CD8-positive, alpha-beta T cell (primary cell): ENCODE measurements at regions of chrX and their contacts with region 1.

Region 1: GRCh38 chrX:46758906-46759644 is at the start of gene SLC9A7:
- DNase-seq: peak; percentile 56 to 86 (median 76)
- ATAC-seq: peak; percentile 84
- H3K4me3 ChIP-seq: peak within 1 kb of the TSS; percentile 52 to 67
- H3K4me3 Mint-ChIP-seq: peak within 1 kb of the TSS; percentile 90
- H3K27ac ChIP-seq: no peak within 1 kb of the TSS
- H3K27ac Mint-ChIP-seq: peak within 1 kb of the TSS; percentile 69
- H3K4me1 ChIP-seq: peaks cover 14% of the 10 kb centered on the region
- H3K4me1 Mint-ChIP-seq: peaks cover 11% of the 10 kb centered on the region
- H3K27me3 ChIP-seq: no peaks in the 10 kb centered on the region
- H3K27me3 Mint-ChIP-seq: peaks cover 8% of the 10 kb centered on the region
- CTCF ChIP-seq: peak; percentile 63
- total RNA-seq, gene SLC9A7: 2.4 to 2.5 TPM

Region 2: GRCh38 chrX:46836701-46837557 is 77.9 kb after region 1 on chrX and contains the start of gene RP2:
- CTCF ChIA-PET with region 1: no interaction called
- POLR2A ChIA-PET with region 1: no interaction called
- intact Hi-C with region 1: loop called in 1 of 2 experiments (anchors 2 kb)
- DNase-seq: peak; percentile 61 to 92 (median 86)
- ATAC-seq: peak; percentile 95
- H3K4me3 ChIP-seq: peak within 1 kb of the TSS; percentile 95 to 96
- H3K4me3 Mint-ChIP-seq: peak within 1 kb of the TSS; percentile 97
- H3K27ac ChIP-seq: peak within 1 kb of the TSS; percentile 82 to 91
- H3K27ac Mint-ChIP-seq: peak within 1 kb of the TSS; percentile 95
- H3K4me1 ChIP-seq: peaks cover 15% of the 10 kb centered on the region
- H3K4me1 Mint-ChIP-seq: peaks cover 24% of the 10 kb centered on the region
- H3K27me3 ChIP-seq: no peaks in the 10 kb centered on the region
- H3K27me3 Mint-ChIP-seq: no peaks in the 10 kb centered on the region
- CTCF ChIP-seq: no peak
- total RNA-seq, gene RP2: 4.4 to 4.9 TPM

Region 3: DNA sequence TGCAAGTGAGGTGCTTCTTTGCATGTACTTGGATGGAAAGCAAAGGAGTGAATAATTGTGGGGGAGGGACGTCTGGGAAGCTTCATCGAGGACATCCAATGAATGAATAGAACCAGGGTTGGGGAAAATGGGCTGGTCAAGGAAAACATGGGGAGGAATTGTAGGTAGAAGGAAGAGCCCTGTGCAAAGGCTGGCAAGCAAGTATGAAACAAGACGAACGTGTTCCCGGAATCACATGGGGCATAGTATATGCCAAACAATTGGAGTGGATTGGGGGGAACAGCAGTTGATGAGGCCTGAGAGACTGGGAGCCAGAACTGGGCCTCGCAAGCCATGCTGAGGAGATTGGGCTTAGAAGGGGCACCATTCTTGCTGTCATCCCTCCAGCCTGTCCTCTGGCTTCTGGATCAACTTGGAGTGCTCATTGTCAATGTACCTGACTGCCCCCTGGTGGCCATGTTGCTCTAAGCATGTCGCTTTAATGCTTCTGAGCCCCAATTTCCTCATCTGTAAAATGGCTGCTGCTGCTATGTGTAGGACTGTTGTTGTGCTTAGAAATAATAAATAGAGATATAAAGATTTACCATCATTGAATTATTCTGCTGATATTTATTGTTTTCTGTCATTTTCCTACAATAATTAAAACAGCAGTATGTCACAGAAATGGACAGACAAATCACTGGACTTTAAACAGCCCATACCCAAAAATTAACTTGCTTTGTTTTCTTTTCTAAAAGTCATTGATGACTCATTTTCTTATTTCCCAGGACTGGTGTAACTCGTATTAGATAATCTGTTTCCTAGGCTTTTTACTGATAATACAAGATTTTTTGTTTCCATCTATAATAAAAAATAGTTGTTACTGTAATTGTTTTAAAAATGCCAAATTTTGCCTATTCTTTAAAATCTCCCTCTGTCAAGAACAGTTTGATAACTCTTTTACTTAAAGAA is 219.5 kb after region 1 on chrX:
- CTCF ChIA-PET with region 1: no interaction called
- POLR2A ChIA-PET with region 1: no interaction called
- intact Hi-C with region 1: loop called in 1 of 2 experiments (anchors 2 kb)
- DNase-seq: peak; percentile 23 to 75 (median 67)
- ATAC-seq: peak; percentile 67
- H3K4me3 ChIP-seq: no peak overlapping the region
- H3K4me3 Mint-ChIP-seq: no peak overlapping the region
- H3K27ac ChIP-seq: no peak overlapping the region
- H3K27ac Mint-ChIP-seq: no peak overlapping the region
- H3K4me1 ChIP-seq: no peaks in the 10 kb centered on the region
- H3K4me1 Mint-ChIP-seq: no peaks in the 10 kb centered on the region
- H3K27me3 ChIP-seq: no peaks in the 10 kb centered on the region
- H3K27me3 Mint-ChIP-seq: no peaks in the 10 kb centered on the region
- CTCF ChIP-seq: peak; percentile 57

Region 4: DNA sequence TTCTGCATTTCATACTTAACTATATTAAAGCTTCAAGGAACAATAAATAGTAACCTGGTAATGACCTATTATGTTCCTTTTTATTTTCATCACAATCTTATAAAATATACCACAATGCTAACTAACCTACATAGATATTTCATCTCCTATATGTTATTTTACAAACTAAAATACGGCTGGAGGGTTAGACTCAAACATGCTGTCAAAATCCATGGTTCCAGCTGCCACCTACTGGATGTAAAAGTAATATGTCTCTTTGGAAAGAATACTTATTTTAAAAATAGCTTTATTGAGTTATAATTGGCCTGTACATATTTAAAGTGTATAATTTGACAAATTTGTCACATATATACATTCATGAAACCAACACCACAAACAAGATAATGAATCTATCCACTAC is 334.2 kb after region 1 on chrX:
- CTCF ChIA-PET with region 1: no interaction called
- POLR2A ChIA-PET with region 1: no interaction called
- intact Hi-C with region 1: loop called (anchors 5 kb)
- DNase-seq: peak in 2 of 9 experiments; percentile 28 to 34
- ATAC-seq: no peak
- H3K4me3 ChIP-seq: no peak overlapping the region
- H3K4me3 Mint-ChIP-seq: no peak overlapping the region
- H3K27ac ChIP-seq: no peak overlapping the region
- H3K27ac Mint-ChIP-seq: no peak overlapping the region
- H3K4me1 ChIP-seq: no peaks in the 10 kb centered on the region
- H3K4me1 Mint-ChIP-seq: peaks cover 9% of the 10 kb centered on the region
- H3K27me3 ChIP-seq: no peaks in the 10 kb centered on the region
- H3K27me3 Mint-ChIP-seq: no peaks in the 10 kb centered on the region
- CTCF ChIP-seq: peak; percentile 48

Region 5: GRCh38 chrX:47297871-47298270 is 538.8 kb after region 1 on chrX:
- CTCF ChIA-PET with region 1: no interaction called
- POLR2A ChIA-PET with region 1: no interaction called
- intact Hi-C with region 1: no loop called
- DNase-seq: no peak
- ATAC-seq: no peak
- H3K4me3 ChIP-seq: no peak overlapping the region
- H3K4me3 Mint-ChIP-seq: no peak overlapping the region
- H3K27ac ChIP-seq: no peak overlapping the region
- H3K27ac Mint-ChIP-seq: no peak overlapping the region
- H3K4me1 ChIP-seq: no peaks in the 10 kb centered on the region
- H3K4me1 Mint-ChIP-seq: no peaks in the 10 kb centered on the region
- H3K27me3 ChIP-seq: no peaks in the 10 kb centered on the region
- H3K27me3 Mint-ChIP-seq: no peaks in the 10 kb centered on the region
- CTCF ChIP-seq: no peak